ENCODE measurements at regions of chr7 and their contacts with region 1.

Region 1: DNA sequence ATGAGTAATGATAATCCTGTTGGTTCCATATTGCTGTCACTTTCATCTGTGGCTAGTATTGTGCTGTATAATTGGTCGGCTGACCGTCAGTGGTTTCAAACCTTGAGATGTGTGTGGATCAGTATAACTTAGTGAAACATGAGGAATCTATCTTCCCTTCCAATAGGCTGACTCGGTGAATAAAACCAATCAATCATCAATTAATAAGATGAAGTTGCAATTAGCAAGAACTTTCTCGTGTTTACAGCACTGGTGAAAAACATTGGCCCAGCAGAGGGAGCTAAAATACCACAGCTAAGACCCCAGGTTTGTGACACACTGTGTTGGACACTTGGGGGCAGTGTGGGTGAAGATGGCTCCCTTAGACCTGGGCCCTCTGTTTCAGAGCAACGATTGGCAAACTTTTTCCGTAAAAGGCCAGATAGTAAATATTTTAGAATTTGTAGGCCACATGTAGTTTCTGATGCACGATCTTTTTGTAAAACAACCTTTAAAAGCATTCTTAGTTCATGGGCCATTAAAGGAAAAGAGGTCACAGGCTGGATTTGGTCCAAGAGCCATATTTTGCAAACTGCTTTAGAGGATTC is 47.8 kb downstream of the STRA8 start:
- DNase-seq: peak; percentile 91
- H3K4me3 ChIP-seq: no peak overlapping the region; a peak in 1 of 4 replicates
- H3K27ac ChIP-seq: no peak overlapping the region
- H3K4me1 ChIP-seq: no peaks in the 10 kb centered on the region
- H3K27me3 ChIP-seq: no peaks in the 10 kb centered on the region; the same call in 1 of the 2 replicates
- CTCF ChIP-seq: peak; percentile 100
- EP300 ChIP-seq: no peak; a peak in 1 of 4 replicates
- RAD21 ChIP-seq: peak; percentile 100

Region 2: GRCh38 chr7:135147899-135148721 is 133.3 kb before region 1 on chr7 and contains the start of gene TMEM140:
- CTCF ChIA-PET with region 1: no interaction called
- POLR2A ChIA-PET with region 1: no interaction called
- DNase-seq: no peak
- H3K4me3 ChIP-seq: peak within 1 kb of the TSS in 1 of 2 experiments; percentile 30; a peak in 3 of 4 replicates
- H3K27ac ChIP-seq: no peak within 1 kb of the TSS
- H3K4me1 ChIP-seq: peaks cover 0 to 2% of the 10 kb centered on the region in 2 experiments; a peak in 1 of 4 replicates
- H3K27me3 ChIP-seq: no peaks in the 10 kb centered on the region
- CTCF ChIP-seq: no peak
- EP300 ChIP-seq: no peak
- RAD21 ChIP-seq: no peak
- polyA plus RNA-seq, gene TMEM140: 0.10 and 0.12 TPM in 2 replicates

Region 3: GRCh38 chr7:135291809-135292253 is 10.4 kb after region 1 on chr7:
- CTCF ChIA-PET with region 1: interaction called, 15 read pairs
- POLR2A ChIA-PET with region 1: no interaction called
- DNase-seq: no peak
- H3K4me3 ChIP-seq: no peak overlapping the region
- H3K27ac ChIP-seq: no peak overlapping the region; a peak in 1 of 4 replicates
- H3K4me1 ChIP-seq: peaks cover 0 to 4% of the 10 kb centered on the region in 2 experiments; a peak in 1 of 4 replicates
- H3K27me3 ChIP-seq: no peaks in the 10 kb centered on the region
- CTCF ChIP-seq: no peak
- EP300 ChIP-seq: no peak
- RAD21 ChIP-seq: no peak

Region 4: DNA sequence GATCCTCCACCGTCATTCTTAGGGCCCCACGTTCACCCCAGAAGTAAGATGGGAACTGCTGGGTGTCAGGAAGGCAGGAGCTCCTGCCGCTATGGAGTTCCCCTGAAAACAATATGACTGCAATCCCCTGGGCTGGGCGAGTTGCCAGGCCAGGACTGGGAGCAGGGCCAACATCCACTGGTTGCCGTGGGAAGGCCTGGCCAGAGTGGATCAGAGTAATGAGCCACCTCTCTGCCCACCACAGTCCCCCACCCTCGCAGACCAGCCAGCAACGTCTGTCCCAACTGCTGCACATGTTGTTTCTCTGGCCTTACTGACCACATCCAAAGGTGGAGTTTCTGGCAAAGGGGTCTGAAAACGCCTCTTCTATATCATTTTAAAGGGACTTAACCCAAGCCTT is 38.8 kb after region 1 on chr7:
- CTCF ChIA-PET with region 1: interaction called, 48 read pairs
- POLR2A ChIA-PET with region 1: no interaction called
- DNase-seq: peak; percentile 90
- H3K4me3 ChIP-seq: no peak overlapping the region
- H3K27ac ChIP-seq: peak overlapping the region; percentile 28 to 89; a peak in 3 of 4 replicates
- H3K4me1 ChIP-seq: peaks cover 0 to 35% of the 10 kb centered on the region in 2 experiments; a peak in 2 of 4 replicates
- H3K27me3 ChIP-seq: no peaks in the 10 kb centered on the region
- CTCF ChIP-seq: no peak
- EP300 ChIP-seq: peak; percentile 30 to 37; a peak in 2 of 4 replicates
- RAD21 ChIP-seq: peak; percentile 28; the same call in 1 of the 2 replicates

Region 5: DNA sequence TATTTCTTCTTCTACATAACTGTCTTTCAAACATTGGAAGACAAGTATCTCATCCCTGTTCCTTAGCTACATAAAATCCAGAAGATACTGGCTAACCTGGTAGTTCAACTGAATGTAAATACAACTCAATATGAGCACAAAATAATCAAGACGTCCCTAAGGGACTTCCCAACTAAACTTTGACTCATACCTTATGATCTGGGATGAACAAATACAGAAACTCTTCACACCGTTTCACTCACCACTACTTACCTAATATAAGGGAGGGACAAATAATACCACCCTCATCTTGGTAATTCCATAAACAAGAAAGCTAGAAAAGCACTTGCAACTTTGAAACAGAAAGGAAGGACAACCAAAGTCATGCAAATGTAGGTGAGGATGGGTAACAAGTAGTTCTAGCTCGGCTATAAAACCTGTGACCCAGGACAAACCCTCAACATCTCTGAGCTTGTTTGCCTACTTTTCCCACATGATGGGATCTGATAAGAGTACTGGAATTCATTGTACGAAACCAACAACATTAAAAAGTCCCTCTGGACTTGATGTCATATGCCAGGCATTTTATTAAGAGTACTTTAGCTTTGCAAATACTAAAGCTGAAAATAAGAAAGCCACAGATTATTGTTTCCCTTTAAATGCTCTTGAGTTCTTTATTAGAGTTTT is 74.1 kb after region 1 on chr7:
- CTCF ChIA-PET with region 1: interaction called, 737 read pairs
- POLR2A ChIA-PET with region 1: no interaction called
- DNase-seq: no peak
- H3K4me3 ChIP-seq: no peak overlapping the region
- H3K27ac ChIP-seq: no peak overlapping the region
- H3K4me1 ChIP-seq: peaks cover 0 to 5% of the 10 kb centered on the region in 2 experiments; a peak in 1 of 4 replicates
- H3K27me3 ChIP-seq: no peaks in the 10 kb centered on the region
- CTCF ChIP-seq: no peak
- EP300 ChIP-seq: no peak
- RAD21 ChIP-seq: no peak

Region 6: GRCh38 chr7:135389971-135390370 is 108.5 kb after region 1 on chr7:
- CTCF ChIA-PET with region 1: no interaction called
- POLR2A ChIA-PET with region 1: no interaction called
- DNase-seq: no peak
- H3K4me3 ChIP-seq: no peak overlapping the region
- H3K27ac ChIP-seq: peak overlapping the region in 1 of 2 experiments; percentile 84; a peak in 2 of 4 replicates
- H3K4me1 ChIP-seq: peaks cover 0 to 36% of the 10 kb centered on the region in 2 experiments; a peak in 3 of 4 replicates
- H3K27me3 ChIP-seq: no peaks in the 10 kb centered on the region
- CTCF ChIP-seq: no peak
- EP300 ChIP-seq: no peak
- RAD21 ChIP-seq: no peak

Region 7: DNA sequence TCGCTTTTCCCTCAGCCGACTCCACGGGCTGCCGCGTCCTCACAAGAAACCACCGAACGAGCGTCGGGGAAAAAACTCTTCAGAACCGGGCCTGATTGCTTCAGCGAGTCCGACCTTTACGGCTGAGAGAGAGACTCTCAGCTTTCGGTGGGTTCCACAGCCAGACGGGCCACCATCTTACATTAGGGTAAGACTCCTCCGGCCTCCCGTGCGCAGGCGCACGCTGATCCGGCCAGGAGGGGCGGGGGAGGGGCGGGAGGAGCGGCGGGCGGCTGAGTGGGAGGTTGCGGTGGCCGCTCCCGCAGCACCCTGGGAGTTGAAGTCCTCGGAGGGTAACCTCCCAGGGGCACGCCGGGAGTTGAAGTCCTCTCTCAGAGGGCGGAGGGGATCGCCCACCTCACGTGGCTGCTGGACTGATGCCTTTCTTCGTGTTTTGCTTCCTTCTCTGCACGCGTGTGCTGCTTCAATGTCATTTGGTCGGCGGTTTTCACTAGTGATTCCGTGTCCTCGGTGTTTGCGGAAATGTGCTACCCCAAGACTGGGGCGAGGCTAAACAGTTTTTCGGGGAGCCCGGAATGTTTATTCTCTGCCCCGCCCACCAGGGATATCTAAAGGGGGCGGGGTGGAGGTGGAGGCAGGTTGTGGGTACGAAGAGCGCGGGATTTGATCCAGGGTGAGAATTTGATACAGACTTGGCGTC is 228.6 kb after region 1 on chr7 and contains the start of gene CNOT4:
- CTCF ChIA-PET with region 1: interaction called, 10 read pairs
- POLR2A ChIA-PET with region 1: no interaction called
- DNase-seq: peak; percentile 98
- H3K4me3 ChIP-seq: peak within 1 kb of the TSS; percentile 58 to 87
- H3K27ac ChIP-seq: peak within 1 kb of the TSS; percentile 90 to 92
- H3K4me1 ChIP-seq: peaks cover 9 to 17% of the 10 kb centered on the region in 2 experiments; a peak in 3 of 4 replicates
- H3K27me3 ChIP-seq: no peaks in the 10 kb centered on the region
- CTCF ChIP-seq: no peak
- EP300 ChIP-seq: no peak
- RAD21 ChIP-seq: no peak
- polyA plus RNA-seq, gene CNOT4: 8.0 and 9.3 TPM in 2 replicates

Region 8: DNA sequence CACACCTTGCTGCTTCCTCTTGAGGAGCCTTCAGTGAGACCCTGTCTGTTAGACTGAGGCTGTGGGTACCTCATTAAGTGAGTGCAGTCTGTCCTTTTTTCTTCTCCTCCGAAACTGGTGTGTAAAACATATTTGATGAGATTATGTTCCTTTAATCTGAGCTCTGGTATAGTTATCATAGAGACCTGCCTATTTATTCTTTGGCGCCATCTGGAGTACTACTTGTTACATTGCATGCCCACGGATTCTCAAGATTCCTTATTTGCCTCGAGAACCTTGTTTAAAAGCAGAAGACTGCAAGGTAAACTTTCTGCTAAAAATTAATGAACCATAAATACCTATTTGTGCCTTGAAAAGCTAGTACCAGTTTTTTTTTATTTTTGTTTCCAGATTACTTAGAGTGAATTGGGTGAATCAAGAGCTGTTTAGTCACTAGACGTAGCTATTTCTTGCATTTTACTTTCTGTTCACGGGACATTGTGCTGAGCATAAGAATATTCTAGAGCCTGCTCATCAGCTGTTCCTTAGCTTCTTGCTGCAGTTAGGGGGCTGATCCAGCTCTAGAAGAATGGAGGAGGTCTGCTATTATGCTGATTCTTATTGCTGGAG is 363.9 kb after region 1 on chr7:
- CTCF ChIA-PET with region 1: interaction called, 61 read pairs
- POLR2A ChIA-PET with region 1: no interaction called
- DNase-seq: peak; percentile 62
- H3K4me3 ChIP-seq: no peak overlapping the region
- H3K27ac ChIP-seq: peak overlapping the region in 1 of 2 experiments; percentile 24; a peak in 2 of 4 replicates
- H3K4me1 ChIP-seq: peaks cover 0 to 6% of the 10 kb centered on the region in 2 experiments; a peak in 2 of 4 replicates
- H3K27me3 ChIP-seq: no peaks in the 10 kb centered on the region
- CTCF ChIP-seq: peak; percentile 92
- EP300 ChIP-seq: no peak
- RAD21 ChIP-seq: peak; percentile 80

Region 9: DNA sequence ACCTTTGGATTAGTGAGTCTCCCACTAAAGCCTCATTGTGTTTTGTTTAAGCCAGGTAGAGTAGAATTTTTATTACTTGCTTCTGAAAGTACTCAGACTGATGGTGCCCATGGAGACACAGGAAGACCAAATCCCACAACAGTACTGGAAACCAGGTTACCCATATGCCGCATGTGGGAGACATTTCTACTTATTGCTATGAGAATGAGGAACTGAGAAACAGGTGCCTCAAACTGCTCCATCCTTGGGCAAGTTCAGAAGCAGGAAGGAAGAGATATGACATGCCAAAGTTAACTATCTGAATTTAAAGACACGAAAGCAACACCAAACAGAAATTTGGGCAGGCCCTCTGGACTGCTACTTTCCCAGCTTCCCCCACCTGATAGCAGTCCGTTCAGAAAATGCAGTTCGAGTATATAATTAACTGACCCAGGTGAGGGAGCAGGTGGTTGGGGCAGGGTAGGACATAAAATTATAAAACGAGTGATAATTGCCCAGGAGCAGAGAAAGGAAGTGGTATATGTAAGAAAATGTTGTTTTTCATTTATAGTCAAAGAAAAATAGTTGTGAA is 1078.0 kb after region 1 on chr7:
- CTCF ChIA-PET with region 1: no interaction called
- POLR2A ChIA-PET with region 1: no interaction called
- DNase-seq: no peak
- H3K4me3 ChIP-seq: no peak overlapping the region
- H3K27ac ChIP-seq: no peak overlapping the region
- H3K4me1 ChIP-seq: no peaks in the 10 kb centered on the region
- H3K27me3 ChIP-seq: no peaks in the 10 kb centered on the region
- CTCF ChIP-seq: no peak
- EP300 ChIP-seq: no peak
- RAD21 ChIP-seq: no peak

Measured in SK-N-SH (cell line).